Activated naive CD4-positive, alpha-beta T cell treated with anti-CD3 and anti-CD28 coated beads for 36 hours (primary cell): ENCODE measurements at regions of chr17 and their contacts with region 1.

Region 1: DNA sequence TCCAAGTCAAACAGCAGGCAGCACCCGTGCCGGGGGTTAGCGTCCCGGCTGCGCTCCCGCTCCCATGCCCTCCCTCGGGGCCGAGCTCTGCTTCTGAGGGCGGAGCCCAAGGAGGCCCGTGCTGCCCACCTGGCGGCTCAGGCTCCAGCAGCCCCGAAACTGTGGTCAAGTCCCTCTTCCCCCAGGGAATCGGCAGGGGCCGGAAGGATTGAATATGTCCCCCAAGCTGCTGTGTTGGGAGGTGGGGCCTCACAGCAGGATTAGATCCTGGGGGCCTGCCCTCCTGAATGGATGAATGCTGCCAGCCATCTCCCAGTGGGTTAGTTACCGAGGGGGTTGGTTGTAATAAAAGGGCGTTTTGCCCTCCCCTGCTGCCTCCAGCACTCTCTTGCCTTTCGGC is 33.9 kb downstream of the MAP2K3 start:
- DNase-seq: no peak
- H3K4me3 Mint-ChIP-seq: no peak overlapping the region
- H3K27ac Mint-ChIP-seq: no peak overlapping the region
- H3K4me1 Mint-ChIP-seq: peaks cover 7% of the 10 kb centered on the region
- H3K27me3 Mint-ChIP-seq: no peaks in the 10 kb centered on the region

Region 2: DNA sequence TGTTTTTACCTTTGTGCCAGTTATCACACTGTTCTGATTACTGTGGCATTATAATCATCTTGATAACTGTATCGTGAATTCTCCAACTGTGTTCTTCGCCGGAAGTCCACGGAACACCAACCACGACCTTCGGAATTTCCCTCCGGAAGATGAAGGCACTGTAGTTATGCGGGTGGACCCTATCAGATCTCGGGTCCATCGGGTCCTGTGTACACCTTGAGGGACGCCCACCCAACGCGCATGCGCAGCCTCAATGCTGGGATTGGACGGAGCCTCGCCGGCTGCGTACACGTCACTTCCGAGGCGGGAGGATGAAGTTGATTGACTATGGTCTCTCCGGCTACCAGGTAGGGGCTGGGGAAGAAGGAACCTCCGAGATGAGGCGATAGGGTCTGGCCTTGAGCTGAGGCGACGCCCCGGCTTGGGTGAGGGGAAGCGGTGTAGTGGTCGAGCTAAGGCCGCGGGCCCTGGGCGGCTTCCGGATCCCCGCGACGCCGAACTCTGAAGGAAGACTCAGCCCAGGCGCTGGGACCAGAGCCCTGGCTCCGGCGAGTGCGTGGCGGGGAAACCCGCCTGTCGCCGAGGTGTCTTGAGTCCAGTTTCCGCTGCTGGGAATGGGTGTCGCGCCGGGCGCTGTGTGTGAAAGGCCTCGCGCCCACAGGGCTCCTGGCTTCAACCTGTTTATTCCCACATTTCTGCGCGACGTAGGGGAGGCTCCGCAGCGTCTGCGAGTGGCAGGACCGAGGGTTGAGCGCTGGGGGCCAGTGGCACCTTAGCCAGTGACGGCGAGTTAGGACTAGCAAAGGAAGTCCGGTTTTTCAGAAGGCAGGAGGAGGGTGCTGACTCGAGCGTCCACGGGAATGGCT is 191.6 kb before region 1 on chr17 and contains the start of gene DHRS7B:
- CTCF ChIA-PET with region 1: no interaction called
- intact Hi-C with region 1: loop called (anchors 1 kb)
- DNase-seq: peak; percentile 98
- H3K4me3 Mint-ChIP-seq: peak within 1 kb of the TSS; percentile 95
- H3K27ac Mint-ChIP-seq: peak within 1 kb of the TSS; percentile 94
- H3K4me1 Mint-ChIP-seq: peaks cover 35% of the 10 kb centered on the region
- H3K27me3 Mint-ChIP-seq: no peaks in the 10 kb centered on the region
- total RNA-seq, gene DHRS7B: 12.0 to 12.1 TPM

Region 3: DNA sequence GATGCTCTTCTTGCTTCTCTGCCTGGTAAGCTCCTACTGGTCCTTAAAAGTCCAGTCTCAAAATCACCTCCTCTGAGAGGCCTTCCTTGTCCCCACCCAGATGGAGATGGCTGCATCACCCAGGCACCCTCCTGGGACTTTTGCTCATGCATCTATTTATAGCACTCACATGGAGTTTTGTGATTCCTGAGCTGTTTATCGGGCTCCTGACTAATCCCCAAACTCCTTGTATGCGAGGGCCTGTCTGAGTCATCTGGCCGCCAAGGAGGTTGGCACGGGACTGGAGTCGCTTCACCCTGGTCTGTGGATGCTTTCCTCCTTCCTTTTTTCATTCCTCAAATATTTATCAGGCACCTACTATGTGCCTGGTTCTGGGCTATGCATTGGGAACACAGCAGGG is 36.2 kb before region 1 on chr17:
- CTCF ChIA-PET with region 1: no interaction called
- intact Hi-C with region 1: no loop called
- DNase-seq: no peak
- H3K4me3 Mint-ChIP-seq: no peak overlapping the region
- H3K27ac Mint-ChIP-seq: no peak overlapping the region
- H3K4me1 Mint-ChIP-seq: peaks cover 59% of the 10 kb centered on the region
- H3K27me3 Mint-ChIP-seq: no peaks in the 10 kb centered on the region